T-cell (primary cell): ENCODE measurements at regions of chr15 and their contacts with region 1.

Region 1: DNA sequence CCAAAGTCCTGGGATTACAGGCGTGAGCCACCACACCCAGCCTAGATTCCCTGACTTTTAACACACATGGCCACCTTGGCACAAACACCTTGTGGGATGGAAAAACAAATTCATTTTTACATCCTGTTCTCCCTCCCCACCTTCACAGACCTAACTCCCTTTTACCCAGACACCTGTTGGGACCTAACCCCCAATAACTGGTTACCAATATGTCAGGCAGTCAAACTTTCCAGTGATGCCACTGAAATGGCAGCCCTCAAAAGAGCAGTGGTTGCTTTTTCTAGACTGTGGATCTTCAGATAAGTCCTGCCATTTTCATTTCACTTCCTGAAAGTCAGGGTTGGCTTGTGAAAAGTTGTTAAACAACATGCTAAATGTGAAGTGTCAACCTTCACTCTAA is 34.9 kb downstream of the SIN3A start:
- DNase-seq: no peak
- ATAC-seq: no peak
- H3K4me3 ChIP-seq: no peak overlapping the region
- H3K4me3 Mint-ChIP-seq: no peak overlapping the region
- H3K27ac ChIP-seq: no peak overlapping the region
- H3K27ac Mint-ChIP-seq: peak overlapping the region; percentile 22 to 36
- H3K4me1 ChIP-seq: no peaks in the 10 kb centered on the region
- H3K4me1 Mint-ChIP-seq: peaks cover 5 to 23% (median 12%) of the 10 kb centered on the region in 3 donors
- H3K27me3 ChIP-seq: no peaks in the 10 kb centered on the region
- H3K27me3 Mint-ChIP-seq: no peaks in the 10 kb centered on the region

Region 2: GRCh38 chr15:75460646-75461045 is 44.1 kb after region 1 on chr15:
- CTCF ChIA-PET with region 1: interaction called in 1 of 2 experiments, 3 read pairs
- POLR2A ChIA-PET with region 1: interaction called in 1 of 2 experiments, 11 read pairs
- DNase-seq: no peak
- ATAC-seq: no peak
- H3K4me3 ChIP-seq: no peak overlapping the region
- H3K4me3 Mint-ChIP-seq: no peak overlapping the region
- H3K27ac ChIP-seq: no peak overlapping the region
- H3K27ac Mint-ChIP-seq: no peak overlapping the region
- H3K4me1 ChIP-seq: peaks cover 0 to 8% of the 10 kb centered on the region in 2 experiments
- H3K4me1 Mint-ChIP-seq: peaks cover 7% of the 10 kb centered on the region in 3 donors
- H3K27me3 ChIP-seq: no peaks in the 10 kb centered on the region
- H3K27me3 Mint-ChIP-seq: no peaks in the 10 kb centered on the region